CD4-positive, alpha-beta T cell (primary cell): ENCODE measurements at regions of chr3 and their contacts with region 1.

Region 1: GRCh38 chr3:110314512-110315114 is 757.0 kb upstream of the NECTIN3 start:
- DNase-seq: peak; percentile 7 to 75 (median 40)
- ATAC-seq: peak; percentile 63
- H3K4me3 ChIP-seq: no peak overlapping the region
- H3K4me3 Mint-ChIP-seq: no peak overlapping the region
- H3K27ac ChIP-seq: no peak overlapping the region
- H3K27ac Mint-ChIP-seq: no peak overlapping the region
- H3K4me1 ChIP-seq: peaks cover 3% of the 10 kb centered on the region
- H3K4me1 Mint-ChIP-seq: no peaks in the 10 kb centered on the region
- H3K27me3 ChIP-seq: no peaks in the 10 kb centered on the region
- H3K27me3 Mint-ChIP-seq: no peaks in the 10 kb centered on the region
- CTCF ChIP-seq: peak; percentile 77

Region 2: DNA sequence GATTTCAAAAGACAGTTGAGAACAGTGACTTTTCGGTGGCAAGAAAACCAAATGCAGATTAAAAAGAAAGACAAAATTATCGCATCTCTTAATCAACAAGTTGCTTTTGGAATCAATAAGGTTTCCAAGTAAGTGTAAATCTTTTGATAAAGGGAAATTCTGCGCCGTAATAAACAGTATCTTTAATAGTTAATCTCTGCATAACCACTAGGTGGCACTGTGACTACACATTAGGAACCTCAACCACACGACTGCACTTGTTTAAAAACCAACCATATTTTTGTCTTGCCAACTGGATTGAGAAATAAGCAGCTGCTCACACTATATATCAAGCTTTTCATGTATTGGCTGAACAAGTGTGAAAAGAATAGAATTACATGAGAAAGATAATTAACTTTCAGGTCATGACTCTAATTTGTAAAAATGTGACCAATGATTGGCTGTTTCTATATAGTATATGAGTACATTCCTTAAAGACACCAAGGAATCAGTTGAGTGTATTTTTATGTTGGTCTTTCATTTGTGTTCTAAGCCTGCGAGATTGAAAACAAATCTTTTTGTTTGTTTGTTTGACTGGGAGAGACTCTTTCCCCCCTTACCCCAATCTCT is 1652.4 kb before region 1 on chr3:
- CTCF ChIA-PET with region 1: no interaction called
- POLR2A ChIA-PET with region 1: no interaction called
- intact Hi-C with region 1: loop called in 1 of 2 experiments (anchors 5 kb)
- DNase-seq: peak in 11 of 14 experiments; percentile 5 to 87 (median 40)
- ATAC-seq: peak; percentile 81
- H3K4me3 ChIP-seq: no peak overlapping the region
- H3K4me3 Mint-ChIP-seq: no peak overlapping the region
- H3K27ac ChIP-seq: no peak overlapping the region
- H3K27ac Mint-ChIP-seq: no peak overlapping the region
- H3K4me1 ChIP-seq: no peaks in the 10 kb centered on the region
- H3K4me1 Mint-ChIP-seq: peaks cover 20% of the 10 kb centered on the region
- H3K27me3 ChIP-seq: no peaks in the 10 kb centered on the region
- H3K27me3 Mint-ChIP-seq: no peaks in the 10 kb centered on the region
- CTCF ChIP-seq: peak; percentile 90

Region 3: DNA sequence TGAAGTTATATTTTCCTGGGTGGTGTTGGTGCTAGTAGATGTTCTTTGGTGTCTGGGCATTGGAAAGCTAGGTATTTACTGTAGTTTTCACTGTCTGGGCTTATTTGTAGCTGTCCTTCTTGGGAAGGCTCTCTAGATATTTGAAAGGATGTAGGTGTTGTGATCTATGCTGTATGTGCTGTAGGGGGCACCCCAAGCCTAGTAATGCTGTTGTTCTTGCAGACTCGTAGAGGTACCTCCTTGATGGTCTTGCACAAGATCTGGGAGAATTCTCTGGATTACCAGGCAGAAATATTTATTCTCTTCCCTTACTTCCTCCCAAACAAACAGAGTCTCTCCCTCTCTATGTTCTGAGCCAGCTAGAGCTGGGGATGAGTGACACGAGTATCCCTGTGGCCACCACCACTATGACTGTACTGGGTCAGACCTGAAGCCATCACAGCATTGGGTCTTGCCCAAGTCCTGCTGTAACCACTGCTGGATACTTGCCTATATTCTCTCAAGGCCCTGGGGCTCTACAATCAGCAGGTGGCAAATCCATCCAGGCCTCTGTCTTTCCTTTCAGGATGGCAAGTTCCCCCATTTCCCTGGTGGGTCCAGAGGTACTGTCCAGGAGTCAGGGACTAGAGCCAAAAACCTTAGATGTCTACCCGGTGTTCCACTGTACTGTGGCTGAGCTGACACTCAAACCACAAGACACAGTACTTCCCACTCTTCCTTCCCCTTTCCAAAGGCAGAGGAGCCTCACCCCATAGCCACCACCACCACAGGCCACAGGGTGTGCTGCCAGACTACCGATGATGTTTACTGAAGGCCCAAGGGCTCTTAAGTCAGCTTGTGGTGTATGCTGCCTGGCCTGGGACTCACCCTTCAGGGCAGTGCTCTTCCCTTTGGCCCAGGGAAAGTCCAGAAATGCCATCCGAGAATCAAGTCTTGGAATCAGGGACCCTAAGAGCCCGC is 782.1 kb before region 1 on chr3:
- CTCF ChIA-PET with region 1: no interaction called
- POLR2A ChIA-PET with region 1: no interaction called
- intact Hi-C with region 1: loop called (anchors 2 to 5 kb)
- DNase-seq: peak in 13 of 14 experiments; percentile 4 to 67 (median 22)
- ATAC-seq: peak; percentile 52
- H3K4me3 ChIP-seq: no peak overlapping the region
- H3K4me3 Mint-ChIP-seq: no peak overlapping the region
- H3K27ac ChIP-seq: no peak overlapping the region
- H3K27ac Mint-ChIP-seq: no peak overlapping the region
- H3K4me1 ChIP-seq: no peaks in the 10 kb centered on the region
- H3K4me1 Mint-ChIP-seq: no peaks in the 10 kb centered on the region
- H3K27me3 ChIP-seq: no peaks in the 10 kb centered on the region
- H3K27me3 Mint-ChIP-seq: peaks cover 5% of the 10 kb centered on the region
- CTCF ChIP-seq: peak; percentile 29

Region 4: GRCh38 chr3:109731620-109732473 is 582.8 kb before region 1 on chr3:
- CTCF ChIA-PET with region 1: interaction called, 5 read pairs
- POLR2A ChIA-PET with region 1: no interaction called
- intact Hi-C with region 1: loop called (anchors 1 to 2 kb)
- DNase-seq: peak; percentile 0 to 78 (median 50)
- ATAC-seq: peak; percentile 88
- H3K4me3 ChIP-seq: no peak overlapping the region
- H3K4me3 Mint-ChIP-seq: no peak overlapping the region
- H3K27ac ChIP-seq: no peak overlapping the region
- H3K27ac Mint-ChIP-seq: no peak overlapping the region
- H3K4me1 ChIP-seq: peaks cover 2% of the 10 kb centered on the region
- H3K4me1 Mint-ChIP-seq: peaks cover 13% of the 10 kb centered on the region
- H3K27me3 ChIP-seq: no peaks in the 10 kb centered on the region
- H3K27me3 Mint-ChIP-seq: no peaks in the 10 kb centered on the region
- CTCF ChIP-seq: peak; percentile 90

Region 5: DNA sequence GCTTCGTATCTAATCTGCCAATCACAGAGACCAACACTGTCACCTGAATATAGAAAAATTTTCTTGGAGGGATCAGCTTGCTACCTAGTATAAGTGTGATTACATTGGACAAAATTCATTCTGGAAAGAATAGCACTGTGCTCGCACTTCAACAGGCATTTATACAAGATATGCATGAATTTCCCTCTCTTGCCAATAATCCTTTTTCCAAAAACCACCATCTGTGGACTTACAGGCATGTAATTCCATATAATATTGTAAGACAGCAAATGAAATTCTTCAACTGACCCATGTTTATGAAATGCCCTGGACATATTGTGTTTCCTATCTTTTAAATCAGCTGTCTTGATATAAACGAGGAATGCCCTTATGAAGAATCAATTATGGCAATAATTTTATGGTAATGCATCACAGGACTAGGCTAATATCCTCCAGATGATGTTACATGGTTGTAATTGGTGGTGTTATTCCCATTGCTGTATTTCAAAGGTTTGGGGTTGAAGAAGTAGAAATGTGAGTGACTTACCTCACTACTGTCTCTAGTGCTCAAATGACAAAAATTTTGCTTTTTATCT is 104.4 kb before region 1 on chr3:
- CTCF ChIA-PET with region 1: no interaction called
- POLR2A ChIA-PET with region 1: no interaction called
- intact Hi-C with region 1: no loop called
- DNase-seq: no peak
- ATAC-seq: no peak
- H3K4me3 ChIP-seq: no peak overlapping the region
- H3K4me3 Mint-ChIP-seq: no peak overlapping the region
- H3K27ac ChIP-seq: no peak overlapping the region
- H3K27ac Mint-ChIP-seq: no peak overlapping the region
- H3K4me1 ChIP-seq: no peaks in the 10 kb centered on the region
- H3K4me1 Mint-ChIP-seq: no peaks in the 10 kb centered on the region
- H3K27me3 ChIP-seq: no peaks in the 10 kb centered on the region
- H3K27me3 Mint-ChIP-seq: no peaks in the 10 kb centered on the region
- CTCF ChIP-seq: no peak

Region 6: DNA sequence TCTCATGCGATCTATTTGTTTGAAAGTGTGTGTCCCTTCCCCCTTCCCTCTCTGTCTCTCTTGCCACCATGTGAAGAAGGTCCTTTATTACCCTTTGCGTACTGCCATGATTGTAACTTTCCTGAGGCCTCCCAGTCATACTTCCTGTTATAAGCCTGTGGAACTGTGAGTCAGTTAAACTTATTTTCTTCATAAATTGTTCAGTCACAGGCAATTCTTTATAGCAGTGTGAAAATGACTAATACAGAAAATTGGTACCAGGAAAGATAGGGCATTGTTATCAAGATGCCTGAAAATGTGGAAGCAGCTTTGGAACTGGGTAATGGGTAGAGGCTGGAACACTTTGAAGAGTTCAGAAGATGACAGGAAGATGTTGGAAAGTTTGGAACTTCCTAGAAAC is 13.3 kb after region 1 on chr3:
- CTCF ChIA-PET with region 1: interaction called, 3 read pairs
- POLR2A ChIA-PET with region 1: no interaction called
- intact Hi-C with region 1: loop called in 1 of 2 experiments (anchors 1 kb)
- DNase-seq: no peak
- ATAC-seq: no peak
- H3K4me3 ChIP-seq: no peak overlapping the region
- H3K4me3 Mint-ChIP-seq: no peak overlapping the region
- H3K27ac ChIP-seq: no peak overlapping the region
- H3K27ac Mint-ChIP-seq: no peak overlapping the region
- H3K4me1 ChIP-seq: no peaks in the 10 kb centered on the region
- H3K4me1 Mint-ChIP-seq: no peaks in the 10 kb centered on the region
- H3K27me3 ChIP-seq: no peaks in the 10 kb centered on the region
- H3K27me3 Mint-ChIP-seq: peaks cover under 1% of the 10 kb centered on the region
- CTCF ChIP-seq: no peak

Region 7: GRCh38 chr3:111080413-111080812 is 765.8 kb after region 1 on chr3:
- CTCF ChIA-PET with region 1: interaction called, 4 read pairs
- POLR2A ChIA-PET with region 1: no interaction called
- intact Hi-C with region 1: loop called in 1 of 2 experiments (anchors 5 kb)
- DNase-seq: peak in 3 of 14 experiments; percentile 34 to 36 (median 35)
- ATAC-seq: no peak
- H3K4me3 ChIP-seq: no peak overlapping the region
- H3K4me3 Mint-ChIP-seq: no peak overlapping the region
- H3K27ac ChIP-seq: no peak overlapping the region
- H3K27ac Mint-ChIP-seq: no peak overlapping the region
- H3K4me1 ChIP-seq: no peaks in the 10 kb centered on the region
- H3K4me1 Mint-ChIP-seq: peaks cover under 1% of the 10 kb centered on the region
- H3K27me3 ChIP-seq: no peaks in the 10 kb centered on the region
- H3K27me3 Mint-ChIP-seq: peaks cover 15% of the 10 kb centered on the region
- CTCF ChIP-seq: peak; percentile 72